Caco-2 (cell line): ENCODE measurements at regions of chr13 and their contacts with region 1.

Region 1: GRCh38 chr13:32001185-32001768 is 30.3 kb upstream of the FRY start:
- DNase-seq: peak; percentile 54 to 67
- H3K4me3 ChIP-seq: no peak overlapping the region
- H3K4me3 Mint-ChIP-seq: no peak overlapping the region
- H3K27ac Mint-ChIP-seq: no peak overlapping the region
- H3K4me1 ChIP-seq: peaks cover 17% of the 10 kb centered on the region
- H3K4me1 Mint-ChIP-seq: peaks cover 22% of the 10 kb centered on the region
- H3K27me3 ChIP-seq: no peaks in the 10 kb centered on the region
- H3K27me3 Mint-ChIP-seq: no peaks in the 10 kb centered on the region
- CTCF ChIP-seq: peak; percentile 53 to 65

Region 2: DNA sequence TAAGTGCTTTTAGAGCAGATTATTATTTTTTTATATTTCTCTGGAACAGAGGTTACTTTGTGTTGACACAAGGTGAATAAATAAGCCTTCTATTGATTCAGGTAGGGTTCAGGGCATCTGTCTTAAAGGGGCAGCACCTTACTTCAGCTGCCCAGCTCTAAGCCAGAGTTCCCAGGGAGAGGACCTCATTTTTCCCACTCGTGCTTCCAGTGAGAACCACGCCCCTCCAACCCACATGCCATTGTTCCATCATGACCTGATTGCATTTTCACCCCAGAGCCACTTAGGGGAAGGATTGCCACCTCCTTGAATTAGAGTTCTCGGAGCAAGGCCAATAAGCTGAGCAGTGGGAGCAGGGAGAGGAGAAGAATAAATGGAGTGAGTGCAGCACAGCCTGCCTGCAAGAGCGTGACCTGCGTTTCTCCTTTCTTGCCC is 74.0 kb before region 1 on chr13:
- CTCF ChIA-PET with region 1: no interaction called
- POLR2A ChIA-PET with region 1: no interaction called
- intact Hi-C with region 1: loop called (anchors 5 kb)
- DNase-seq: peak in 1 of 2 experiments; percentile 13
- H3K4me3 ChIP-seq: no peak overlapping the region
- H3K4me3 Mint-ChIP-seq: no peak overlapping the region
- H3K27ac Mint-ChIP-seq: no peak overlapping the region
- H3K4me1 ChIP-seq: peaks cover 14% of the 10 kb centered on the region
- H3K4me1 Mint-ChIP-seq: peaks cover 5% of the 10 kb centered on the region
- H3K27me3 ChIP-seq: no peaks in the 10 kb centered on the region
- H3K27me3 Mint-ChIP-seq: no peaks in the 10 kb centered on the region
- CTCF ChIP-seq: no peak

Region 3: GRCh38 chr13:31987535-31988170 is 13.6 kb before region 1 on chr13:
- CTCF ChIA-PET with region 1: no interaction called
- POLR2A ChIA-PET with region 1: no interaction called
- intact Hi-C with region 1: no loop called
- DNase-seq: no peak
- H3K4me3 ChIP-seq: no peak overlapping the region
- H3K4me3 Mint-ChIP-seq: no peak overlapping the region
- H3K27ac Mint-ChIP-seq: no peak overlapping the region
- H3K4me1 ChIP-seq: peaks cover 17% of the 10 kb centered on the region; the same call in 1 of the 2 replicates
- H3K4me1 Mint-ChIP-seq: peaks cover 6% of the 10 kb centered on the region
- H3K27me3 ChIP-seq: no peaks in the 10 kb centered on the region
- H3K27me3 Mint-ChIP-seq: no peaks in the 10 kb centered on the region
- CTCF ChIP-seq: no peak